HEK293T (cell line): ENCODE measurements at regions of chr2 and their contacts with region 1.

Region 1: DNA sequence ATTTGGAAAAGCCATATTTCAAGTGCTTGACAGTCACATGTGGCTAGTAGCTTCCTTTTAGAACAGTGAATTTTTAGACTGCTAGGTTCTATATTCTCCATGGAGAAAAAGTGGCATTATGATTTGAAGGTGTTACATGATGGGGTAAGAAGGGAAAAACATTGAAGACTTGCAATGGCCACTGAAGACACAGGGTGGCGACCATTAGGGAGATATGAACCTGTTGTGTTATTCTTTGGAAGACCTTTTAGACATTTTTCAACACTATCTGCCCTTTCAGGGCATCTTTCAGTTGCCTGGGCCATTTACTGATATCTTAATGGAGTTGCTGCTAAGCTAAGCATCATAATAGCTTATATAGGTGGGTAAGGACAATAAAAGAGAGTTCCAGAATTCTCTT is 1387.2 kb downstream of the SUCLG1 start:
- DNase-seq: no peak

Region 2: GRCh38 chr2:83058683-83059082 is 13.2 kb before region 1 on chr2:
- CTCF ChIA-PET with region 1: no interaction called
- POLR2A ChIA-PET with region 1: no interaction called
- DNase-seq: no peak

Region 3: GRCh38 chr2:83229443-83229842 is 157.5 kb after region 1 on chr2:
- CTCF ChIA-PET with region 1: interaction called, 10 read pairs
- POLR2A ChIA-PET with region 1: no interaction called
- DNase-seq: no peak